ENCODE measurements at regions of chr9 and their contacts with region 1.

Region 1: DNA sequence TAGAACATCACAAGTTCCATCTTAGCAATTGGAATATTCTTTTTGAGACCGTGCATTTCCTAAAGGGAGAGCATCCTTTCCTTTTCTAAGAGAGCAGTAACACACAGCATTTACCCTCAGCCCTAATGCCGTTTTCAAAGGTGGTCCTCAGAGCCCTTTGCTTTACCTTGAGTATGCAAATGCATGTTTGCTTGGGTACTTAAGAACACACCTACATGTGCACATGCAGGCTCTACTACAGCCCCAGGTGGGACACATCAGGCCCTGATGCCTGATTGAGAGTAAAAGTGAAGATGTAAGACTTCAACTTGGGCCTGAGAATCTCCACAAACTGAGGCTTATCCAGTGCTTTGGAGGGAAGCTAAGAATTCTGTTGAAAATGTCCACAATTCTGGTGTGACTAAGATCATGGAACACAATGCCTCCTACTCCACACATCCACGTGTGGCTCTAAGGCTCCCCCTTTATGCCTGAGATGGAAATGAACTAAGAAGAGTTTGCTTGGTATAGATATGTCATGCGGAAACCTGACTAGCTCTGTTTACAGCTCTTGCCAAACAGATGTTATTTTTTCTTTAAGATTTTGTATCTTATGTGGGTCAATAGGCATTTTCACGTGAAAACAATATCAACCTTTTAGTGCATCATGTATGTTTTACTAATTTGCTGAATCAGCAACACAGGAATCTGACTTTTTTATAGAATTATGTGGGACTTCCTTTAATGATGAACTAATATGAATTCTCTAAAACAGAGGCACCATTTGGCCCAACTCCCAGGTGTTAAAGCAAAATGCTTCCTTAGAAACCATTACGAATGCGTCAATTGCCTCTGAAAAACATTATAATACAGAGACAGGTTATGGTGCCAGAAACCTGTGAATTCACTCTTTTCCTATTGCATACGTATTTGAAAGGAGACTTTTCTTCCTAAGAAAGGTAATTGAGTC is 48.9 kb upstream of the SLC2A8 start:
- DNase-seq: peak; percentile 13
- ATAC-seq: peak; percentile 85
- H3K4me3 ChIP-seq: no peak overlapping the region
- H3K27ac ChIP-seq: no peak overlapping the region
- H3K4me1 ChIP-seq: no peaks in the 10 kb centered on the region; the same call in 1 of the 2 replicates
- H3K27me3 ChIP-seq: no peaks in the 10 kb centered on the region
- CTCF ChIP-seq: peak; percentile 61

Region 2: GRCh38 chr9:127214421-127215267 is 133.5 kb before region 1 on chr9:
- CTCF ChIA-PET with region 1: no interaction called
- POLR2A ChIA-PET with region 1: no interaction called
- in situ Hi-C with region 1: no loop called
- intact Hi-C with region 1: loop called (anchors 5 kb)
- DNase-seq: no peak
- ATAC-seq: peak; percentile 79; the same call in 1 of the 2 replicates
- H3K4me3 ChIP-seq: no peak overlapping the region
- H3K27ac ChIP-seq: no peak overlapping the region
- H3K4me1 ChIP-seq: no peaks in the 10 kb centered on the region
- H3K27me3 ChIP-seq: no peaks in the 10 kb centered on the region
- CTCF ChIP-seq: peak; percentile 84

Region 3: DNA sequence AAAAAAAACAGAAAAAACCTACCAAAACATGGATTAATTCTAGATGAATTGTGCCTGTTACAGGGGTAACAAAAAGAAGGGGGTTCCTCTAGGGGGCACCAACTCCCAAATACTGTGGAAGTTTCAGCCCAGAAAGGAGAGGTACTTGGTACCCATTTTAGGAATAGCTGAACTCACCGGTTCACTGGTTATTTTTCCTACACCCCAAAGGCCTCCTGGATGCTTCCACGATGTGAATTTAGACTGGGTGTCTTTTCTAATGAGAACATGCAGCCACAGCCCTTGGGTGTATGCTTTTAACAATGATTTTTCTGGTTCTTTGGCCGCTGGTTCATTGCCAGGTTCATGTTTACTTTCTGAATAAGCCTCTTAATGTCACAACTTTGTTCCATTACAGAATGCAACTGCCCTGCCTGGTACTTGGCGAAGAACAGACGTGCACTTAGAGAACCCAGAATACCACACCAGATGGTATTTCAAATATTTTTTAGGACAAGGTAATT is 36.8 kb before region 1 on chr9:
- CTCF ChIA-PET with region 1: no interaction called
- POLR2A ChIA-PET with region 1: no interaction called
- in situ Hi-C with region 1: no loop called
- intact Hi-C with region 1: no loop called
- DNase-seq: peak; percentile 51
- ATAC-seq: peak; percentile 68
- H3K4me3 ChIP-seq: no peak overlapping the region
- H3K27ac ChIP-seq: no peak overlapping the region
- H3K4me1 ChIP-seq: peaks cover 8% of the 10 kb centered on the region
- H3K27me3 ChIP-seq: no peaks in the 10 kb centered on the region
- CTCF ChIP-seq: peak; percentile 45

Measured in Panc1 (cell line).